Ascending aorta (tissue), 2 donors: ENCODE measurements at regions of chr3 and their contacts with region 1.

Region 1: DNA sequence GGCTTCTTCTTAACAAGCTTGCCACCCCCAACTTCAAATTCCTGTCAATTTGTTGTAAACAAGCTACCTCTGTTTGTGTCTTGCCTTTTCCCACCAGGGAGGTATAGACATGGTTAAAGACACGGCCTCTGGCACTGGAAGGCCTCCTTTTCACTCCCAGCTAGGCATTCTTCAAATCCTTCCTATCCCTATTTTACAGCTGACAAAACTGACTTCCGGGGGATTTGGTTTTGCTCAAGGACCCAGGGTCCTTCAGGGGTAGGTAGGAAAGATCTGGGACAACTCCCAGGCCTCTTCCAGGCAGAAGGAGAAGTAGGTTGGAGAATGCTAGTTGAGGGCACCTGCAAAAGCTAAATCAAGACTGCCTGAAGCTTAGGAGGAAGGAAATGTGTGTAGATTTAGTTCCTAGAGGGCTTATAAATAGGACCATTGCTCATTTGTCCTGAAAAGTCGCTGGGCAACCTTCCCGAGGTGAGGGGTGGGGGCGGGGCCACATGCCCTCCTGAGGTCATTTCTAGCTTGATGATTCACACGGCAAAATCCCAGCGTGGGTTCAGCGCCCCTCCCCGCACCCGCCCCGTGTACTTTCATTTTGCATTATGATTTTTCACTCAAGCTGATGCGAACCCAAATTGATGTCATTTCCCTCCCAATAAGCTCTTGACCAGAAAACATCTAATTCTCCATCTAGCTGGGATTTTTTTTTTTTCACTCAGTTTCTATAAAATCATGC is 365.5 kb downstream of the SHQ1 start:
- DNase-seq: peak; percentile 56 to 93
- H3K4me3 ChIP-seq: peak overlapping the region; percentile 34 to 56
- H3K27ac ChIP-seq: peak overlapping the region; percentile 62 to 83
- H3K4me1 ChIP-seq: peaks cover 5 to 16% of the 10 kb centered on the region in 2 donors
- H3K27me3 ChIP-seq: no peaks in the 10 kb centered on the region
- CTCF ChIP-seq: no peak

Region 2: DNA sequence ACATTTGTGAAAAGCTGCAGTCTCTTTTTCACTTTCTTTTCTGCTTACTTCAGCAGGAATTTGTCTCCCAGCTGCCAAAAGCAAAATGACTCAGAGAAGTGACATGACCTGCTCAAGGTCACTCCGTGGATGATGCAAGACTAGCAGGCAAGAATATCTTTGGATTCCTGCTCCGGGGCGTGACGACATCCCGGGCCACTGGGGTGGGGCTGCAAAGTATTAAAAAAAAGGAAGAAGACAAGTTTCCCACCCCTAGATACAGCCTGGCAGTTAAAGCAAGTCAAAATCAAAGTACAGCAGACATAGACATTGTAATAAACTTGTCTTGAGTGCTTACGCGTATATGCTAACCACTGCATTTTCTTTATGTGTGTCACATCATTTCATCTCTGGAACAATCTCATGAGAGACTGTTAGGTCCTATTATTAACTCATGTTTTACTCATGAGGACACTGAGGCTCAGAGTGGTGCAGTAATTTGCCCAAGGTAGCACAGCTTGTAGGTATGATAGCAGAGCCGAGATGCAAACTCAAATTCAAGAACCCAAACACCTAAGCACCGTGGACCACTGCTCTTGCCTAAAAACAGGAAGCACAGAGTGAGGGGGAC is 212.6 kb before region 1 on chr3:
- intact Hi-C with region 1: loop called (anchors 2 kb)
- DNase-seq: peak; percentile 78 to 95
- H3K4me3 ChIP-seq: no peak overlapping the region
- H3K27ac ChIP-seq: peak overlapping the region in 1 of 2 donors; percentile 10
- H3K4me1 ChIP-seq: peaks cover 0 to 24% of the 10 kb centered on the region in 2 donors
- H3K27me3 ChIP-seq: no peaks in the 10 kb centered on the region
- CTCF ChIP-seq: no peak

Region 3: DNA sequence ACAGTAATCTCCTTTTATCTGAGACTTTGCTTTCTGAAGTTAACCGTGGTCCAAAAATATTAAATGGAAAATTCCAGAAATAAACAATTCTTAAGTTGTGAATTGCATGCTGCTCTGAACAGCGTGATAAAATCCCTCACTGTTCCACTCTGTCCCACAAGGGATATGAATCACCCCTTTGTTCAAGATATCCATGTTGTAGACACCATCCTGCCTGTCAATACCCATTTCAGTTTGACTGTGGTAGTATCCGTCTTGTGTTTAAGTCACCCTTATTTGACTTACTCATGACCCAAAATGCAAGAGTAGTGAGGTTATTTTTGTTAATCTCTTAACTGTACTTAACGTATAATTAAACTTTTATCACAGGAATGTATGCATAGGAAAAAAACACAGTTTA is 69.5 kb before region 1 on chr3:
- intact Hi-C with region 1: no loop called
- DNase-seq: no peak
- H3K4me3 ChIP-seq: no peak overlapping the region
- H3K27ac ChIP-seq: no peak overlapping the region
- H3K4me1 ChIP-seq: peaks cover 0 to 3% of the 10 kb centered on the region in 2 donors
- H3K27me3 ChIP-seq: no peaks in the 10 kb centered on the region
- CTCF ChIP-seq: no peak